K562 (cell line): ENCODE measurements at regions of chr5 and their contacts with region 1.

Region 1: GRCh38 chr5:157524887-157525286 is 50.7 kb downstream of the ADAM19 start:
- DNase-seq: no peak
- ATAC-seq: no peak
- H3K4me3 ChIP-seq: no peak overlapping the region
- H3K27ac ChIP-seq: no peak overlapping the region
- H3K4me1 ChIP-seq: no peaks in the 10 kb centered on the region
- H3K27me3 ChIP-seq: peaks cover 0 to 7% of the 10 kb centered on the region in 2 experiments; a peak in 2 of 5 replicates
- CTCF ChIP-seq: no peak
- EP300 ChIP-seq: no peak
- POLR2A ChIP-seq: no peak
- RAD21 ChIP-seq: no peak

Region 2: GRCh38 chr5:157535042-157535865 is 10.4 kb after region 1 on chr5:
- CTCF ChIA-PET with region 1: no interaction called
- POLR2A ChIA-PET with region 1: interaction called, 13 read pairs
- in situ Hi-C with region 1: no loop called
- intact Hi-C with region 1: no loop called
- DNase-seq: peak; percentile 17 to 77 (median 42)
- ATAC-seq: peak; percentile 82
- H3K4me3 ChIP-seq: no peak overlapping the region
- H3K27ac ChIP-seq: peak overlapping the region; percentile 31; the same call in 2 of the 3 replicates
- H3K4me1 ChIP-seq: peaks cover 11 to 26% of the 10 kb centered on the region in 2 experiments; a peak in 4 of 5 replicates
- H3K27me3 ChIP-seq: no peaks in the 10 kb centered on the region
- CTCF ChIP-seq: no peak
- EP300 ChIP-seq: peak; percentile 90
- POLR2A ChIP-seq: no peak
- RAD21 ChIP-seq: no peak

Region 3: GRCh38 chr5:157563373-157563928 is 38.6 kb after region 1 on chr5:
- CTCF ChIA-PET with region 1: no interaction called
- POLR2A ChIA-PET with region 1: no interaction called
- in situ Hi-C with region 1: no loop called
- intact Hi-C with region 1: no loop called
- DNase-seq: no peak
- ATAC-seq: no peak
- H3K4me3 ChIP-seq: no peak overlapping the region
- H3K27ac ChIP-seq: no peak overlapping the region
- H3K4me1 ChIP-seq: no peaks in the 10 kb centered on the region; a peak in 1 of 5 replicates
- H3K27me3 ChIP-seq: peaks cover 0 to 13% of the 10 kb centered on the region in 2 experiments; a peak in 4 of 5 replicates
- CTCF ChIP-seq: no peak
- EP300 ChIP-seq: no peak
- POLR2A ChIP-seq: no peak
- RAD21 ChIP-seq: no peak

Region 4: GRCh38 chr5:157640406-157641066 is 115.6 kb after region 1 on chr5:
- CTCF ChIA-PET with region 1: no interaction called
- POLR2A ChIA-PET with region 1: no interaction called
- in situ Hi-C with region 1: no loop called
- intact Hi-C with region 1: no loop called
- DNase-seq: no peak
- ATAC-seq: peak; percentile 27; the same call in 2 of the 3 replicates
- H3K4me3 ChIP-seq: no peak overlapping the region
- H3K27ac ChIP-seq: no peak overlapping the region
- H3K4me1 ChIP-seq: no peaks in the 10 kb centered on the region
- H3K27me3 ChIP-seq: peaks cover 2 to 6% of the 10 kb centered on the region in 2 experiments; a peak in 2 of 5 replicates
- CTCF ChIP-seq: no peak
- EP300 ChIP-seq: no peak
- POLR2A ChIP-seq: no peak
- RAD21 ChIP-seq: no peak